Esophagus muscularis mucosa (tissue), 4 donors: ENCODE measurements at regions of chr18 and their contacts with region 1.

Region 1: DNA sequence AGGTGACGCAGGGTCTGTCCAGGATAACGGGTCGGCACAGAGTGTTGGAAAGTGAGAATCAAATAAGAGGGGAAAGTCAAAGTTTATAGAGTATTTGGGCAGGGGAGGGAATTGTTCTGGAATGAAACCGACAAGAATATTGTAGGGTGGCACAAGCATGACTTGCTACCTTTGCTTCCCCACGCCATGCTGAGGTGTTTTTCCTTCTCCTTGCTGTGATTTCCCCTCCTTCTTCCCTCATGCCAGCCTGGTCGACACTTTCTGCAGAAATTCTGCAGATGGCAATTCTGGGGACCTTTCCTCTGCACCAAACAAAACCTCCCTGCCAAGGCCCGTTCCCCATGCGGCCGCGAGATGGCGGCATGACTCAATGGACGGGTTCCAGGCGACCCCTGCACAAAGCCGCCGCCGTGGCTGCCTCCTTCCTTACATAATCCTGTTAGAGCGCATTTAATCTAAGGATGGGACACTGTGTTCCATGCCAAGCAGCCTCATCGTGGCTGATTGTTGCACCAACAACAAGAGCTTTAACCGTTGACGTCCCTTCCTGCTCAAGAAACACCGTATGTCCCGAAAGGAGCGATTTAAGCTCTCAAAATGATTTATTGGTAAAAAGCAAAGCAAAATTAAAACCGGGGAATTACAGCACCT is at the start of gene MRO:
- DNase-seq: peak; percentile 96
- H3K4me3 ChIP-seq: peak within 1 kb of the TSS; percentile 40 to 58 (median 42)
- H3K27ac ChIP-seq: peak within 1 kb of the TSS in 3 of 4 donors; percentile 34 to 55 (median 38)
- H3K4me1 ChIP-seq: peaks cover 20 to 35% (median 29%) of the 10 kb centered on the region in 4 donors
- H3K27me3 ChIP-seq: no peaks in the 10 kb centered on the region
- CTCF ChIP-seq: peak in 2 of 3 experiments; percentile 93 to 94
- EP300 ChIP-seq: peak; percentile 70
- POLR2A ChIP-seq: no peak
- total RNA-seq, gene MRO: 0.52 to 1.4 (median 0.83) TPM

Region 2: DNA sequence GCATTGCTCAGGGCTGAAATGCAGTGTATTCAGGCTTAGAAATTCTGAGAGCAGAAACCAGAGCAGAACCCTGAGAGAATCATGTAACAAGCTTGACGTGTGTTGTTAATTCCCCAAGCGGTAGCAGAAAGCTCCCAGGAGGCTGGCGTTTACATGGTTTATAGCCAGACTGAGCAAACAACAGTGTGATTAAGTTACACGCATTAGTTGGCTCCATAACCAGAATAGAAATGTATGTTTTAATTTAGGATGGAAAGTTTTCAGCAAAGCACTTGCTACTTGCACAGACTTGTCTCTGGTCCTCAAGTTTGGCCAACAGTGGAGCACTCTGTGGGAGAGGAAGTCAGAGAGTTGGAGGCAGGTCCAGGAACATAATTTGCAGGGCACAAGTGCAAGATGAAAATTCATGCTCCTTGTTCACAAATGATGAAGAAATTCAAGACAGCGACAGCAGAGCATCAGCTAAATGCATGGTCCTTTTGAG is 190.7 kb before region 1 on chr18:
- intact Hi-C with region 1: no loop called
- DNase-seq: no peak
- H3K4me3 ChIP-seq: no peak overlapping the region
- H3K27ac ChIP-seq: no peak overlapping the region
- H3K4me1 ChIP-seq: peaks cover 5 to 18% (median 15%) of the 10 kb centered on the region in 4 donors
- H3K27me3 ChIP-seq: no peaks in the 10 kb centered on the region
- CTCF ChIP-seq: no peak
- EP300 ChIP-seq: no peak
- POLR2A ChIP-seq: no peak

Region 3: GRCh38 chr18:50944245-50944932 is 124.5 kb after region 1 on chr18:
- intact Hi-C with region 1: no loop called
- DNase-seq: no peak
- H3K4me3 ChIP-seq: no peak overlapping the region
- H3K27ac ChIP-seq: no peak overlapping the region
- H3K4me1 ChIP-seq: no peaks in the 10 kb centered on the region
- H3K27me3 ChIP-seq: no peaks in the 10 kb centered on the region
- CTCF ChIP-seq: no peak
- EP300 ChIP-seq: no peak
- POLR2A ChIP-seq: no peak

Region 4: DNA sequence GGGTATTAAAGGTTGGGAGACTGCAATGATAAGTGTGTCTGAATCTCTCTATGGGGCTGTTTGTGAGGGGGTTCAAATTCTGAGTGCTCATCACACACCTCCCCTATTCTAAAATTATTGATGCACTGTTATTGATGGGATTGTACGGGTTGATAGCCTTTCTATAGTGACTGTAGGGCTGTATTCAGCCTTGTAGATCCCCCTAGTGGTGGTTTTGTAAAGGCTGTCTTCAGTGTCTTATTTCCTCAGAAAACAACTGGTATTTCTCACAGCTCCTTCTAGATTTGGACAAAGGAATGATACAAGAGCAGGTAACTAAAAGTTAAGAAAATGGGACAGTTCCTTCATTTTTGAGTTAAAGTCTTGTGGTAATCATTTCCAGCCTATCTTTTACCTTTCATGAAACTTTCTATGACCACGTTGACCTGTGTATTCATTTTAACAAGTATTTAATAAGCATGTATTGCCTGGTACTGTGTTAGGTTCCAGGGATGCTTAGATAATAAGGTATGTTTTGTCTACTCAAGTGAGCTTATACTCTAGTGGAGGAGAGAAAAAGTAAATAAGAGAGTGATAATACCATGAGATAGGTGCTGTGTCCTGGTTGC is 231.4 kb after region 1 on chr18:
- intact Hi-C with region 1: loop called (anchors 5 kb)
- DNase-seq: no peak
- H3K4me3 ChIP-seq: no peak overlapping the region
- H3K27ac ChIP-seq: no peak overlapping the region
- H3K4me1 ChIP-seq: peaks cover 4 to 56% (median 32%) of the 10 kb centered on the region in 4 donors
- H3K27me3 ChIP-seq: no peaks in the 10 kb centered on the region
- CTCF ChIP-seq: peak; percentile 64 to 80 (median 70)
- EP300 ChIP-seq: no peak
- POLR2A ChIP-seq: no peak